BJ (cell line): ENCODE measurements at regions of chr7 and their contacts with region 1.

Region 1: DNA sequence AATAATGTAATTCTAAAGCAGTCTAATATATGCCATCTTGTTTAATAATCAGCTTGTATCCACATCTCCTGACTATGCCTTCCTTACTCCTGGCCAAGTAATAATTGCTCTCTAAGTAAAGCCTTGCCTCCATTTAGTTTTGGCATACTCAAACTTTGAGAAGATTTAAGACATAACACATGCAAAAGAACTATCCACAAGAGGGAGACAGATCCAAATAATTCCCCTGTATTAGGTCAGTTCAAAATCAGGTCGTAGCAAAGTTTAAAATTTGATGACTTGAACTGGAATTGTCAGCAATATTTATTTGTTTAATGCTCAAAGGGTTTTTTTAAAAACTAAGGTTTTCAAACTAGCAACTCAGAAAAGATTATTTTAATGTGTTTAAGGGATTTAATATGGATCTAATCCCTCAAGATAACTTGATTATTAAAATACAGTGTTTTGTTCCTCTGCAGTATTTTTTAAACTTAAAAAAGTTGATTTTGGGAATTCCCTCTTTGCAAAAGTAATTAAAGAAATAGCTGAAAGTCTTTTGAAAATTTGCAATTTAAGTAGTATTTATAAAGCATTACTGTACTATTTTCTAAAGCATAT is 95.3 kb downstream of the HDAC9 start:
- DNase-seq: no peak
- H3K4me3 ChIP-seq: no peak overlapping the region
- H3K27me3 ChIP-seq: no peaks in the 10 kb centered on the region
- CTCF ChIP-seq: peak; percentile 63

Region 2: DNA sequence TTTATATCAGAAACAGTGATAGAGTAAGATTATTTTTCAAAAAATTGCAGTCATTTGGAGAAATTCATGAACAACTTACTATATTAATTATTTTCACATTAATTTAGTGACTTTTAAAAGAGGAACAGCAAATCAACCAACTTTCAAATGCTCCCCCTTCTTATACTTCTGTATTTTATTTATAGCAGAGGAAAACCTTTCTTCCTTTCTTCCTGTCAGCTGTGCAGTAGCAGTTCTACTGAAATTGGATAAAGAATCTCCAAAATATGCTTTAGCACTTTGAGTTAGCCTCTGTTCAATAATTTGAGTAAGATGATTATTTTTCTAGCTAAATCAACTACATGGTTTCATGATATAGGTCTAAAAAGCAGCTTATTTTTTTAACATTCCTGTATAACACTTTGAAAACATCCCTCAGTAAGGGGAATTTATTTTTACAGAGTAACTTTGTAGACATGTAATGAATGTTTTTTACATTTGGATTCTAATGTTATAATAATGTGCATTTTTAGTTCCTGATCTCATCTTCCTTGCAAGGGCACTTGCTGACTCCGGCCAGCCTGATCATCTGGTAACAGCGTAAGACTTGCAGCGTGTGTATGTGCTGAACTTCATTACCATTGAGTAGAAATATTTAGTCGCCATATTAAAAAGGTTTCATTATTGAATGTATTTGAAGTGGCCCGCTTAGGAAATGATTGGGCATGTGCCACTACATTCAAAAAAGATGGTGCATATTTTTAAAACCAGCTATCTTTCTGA is 253.6 kb before region 1 on chr7:
- CTCF ChIA-PET with region 1: no interaction called
- POLR2A ChIA-PET with region 1: no interaction called
- DNase-seq: no peak
- H3K4me3 ChIP-seq: no peak overlapping the region
- H3K27me3 ChIP-seq: no peaks in the 10 kb centered on the region
- CTCF ChIP-seq: no peak

Region 3: DNA sequence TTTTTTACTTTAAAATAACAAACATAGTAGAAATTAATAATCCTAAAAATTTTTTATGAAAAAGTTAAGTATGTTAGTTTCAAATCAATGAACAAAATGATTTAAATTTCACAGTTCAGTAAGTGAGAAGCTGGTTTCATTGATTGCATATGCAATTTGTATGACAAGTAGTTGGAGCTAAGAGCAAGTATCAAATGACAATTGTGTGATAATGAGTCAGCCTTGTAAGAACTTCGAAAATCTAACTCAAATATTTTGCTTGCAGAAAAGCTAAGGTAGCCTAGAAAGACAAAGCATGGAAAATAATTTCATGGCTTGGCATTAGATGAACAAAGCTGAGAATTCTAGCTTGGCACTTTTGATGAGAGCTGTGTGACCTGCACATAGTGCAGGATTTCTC is 16.2 kb after region 1 on chr7:
- CTCF ChIA-PET with region 1: interaction called, 10 read pairs
- POLR2A ChIA-PET with region 1: no interaction called
- DNase-seq: no peak
- H3K4me3 ChIP-seq: no peak overlapping the region
- H3K27me3 ChIP-seq: no peaks in the 10 kb centered on the region
- CTCF ChIP-seq: no peak

Region 4: GRCh38 chr7:18666107-18666728 is 75.4 kb after region 1 on chr7:
- CTCF ChIA-PET with region 1: interaction called, 12 read pairs
- POLR2A ChIA-PET with region 1: no interaction called
- DNase-seq: no peak
- H3K4me3 ChIP-seq: no peak overlapping the region
- H3K27me3 ChIP-seq: no peaks in the 10 kb centered on the region
- CTCF ChIP-seq: peak; percentile 96